ENCODE measurements at regions of chr1 and their contacts with region 1.

Region 1: GRCh38 chr1:201447911-201448871 is 20.8 kb downstream of the PHLDA3 start:
- DNase-seq: peak; percentile 70 to 87 (median 78)
- ATAC-seq: peak; percentile 46 to 86 (median 78)
- H3K4me3 ChIP-seq: no peak overlapping the region
- H3K27ac ChIP-seq: peak overlapping the region; percentile 9 to 84 (median 64)
- H3K4me1 ChIP-seq: peaks cover 9 to 41% (median 28%) of the 10 kb centered on the region in 12 donors
- H3K27me3 ChIP-seq: no peaks in the 10 kb centered on the region
- CTCF ChIP-seq: peak; percentile 78 to 93 (median 85)
- POLR2A ChIP-seq: no peak

Region 2: DNA sequence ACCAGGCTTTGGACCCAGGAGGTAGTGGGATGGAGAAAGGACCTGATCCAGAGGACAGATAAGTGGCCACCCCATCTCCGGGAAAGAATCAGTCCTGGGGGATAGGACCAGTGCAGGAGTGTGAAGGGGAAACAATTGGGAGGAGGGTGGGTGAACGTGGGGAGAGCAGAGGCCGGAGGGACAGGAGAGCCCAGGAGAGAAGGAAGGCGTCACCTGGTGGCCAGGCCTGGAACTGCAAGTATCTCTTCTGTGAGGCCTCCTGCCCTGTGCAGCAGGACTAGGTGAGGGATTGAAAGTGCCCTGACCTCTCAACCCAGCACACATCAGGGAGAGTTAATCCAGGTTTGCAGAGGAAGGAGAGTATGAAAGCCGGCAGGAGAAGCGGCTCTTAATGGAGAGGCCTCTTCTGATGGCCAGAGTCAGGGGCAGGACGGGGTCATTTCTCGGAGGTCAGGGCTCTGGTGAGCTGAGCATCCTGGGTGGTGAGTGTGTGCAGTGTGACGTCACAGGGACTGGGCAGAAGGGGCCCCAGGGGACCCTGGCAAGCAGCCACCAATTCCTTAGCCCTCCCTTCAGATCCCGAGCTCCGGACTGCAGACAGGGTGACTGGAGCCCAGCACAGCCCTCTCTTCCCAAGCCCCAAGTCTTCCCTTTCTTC is 39.9 kb before region 1 on chr1:
- intact Hi-C with region 1: no loop called
- DNase-seq: peak; percentile 75 to 86 (median 83)
- ATAC-seq: peak; percentile 70 to 87 (median 80)
- H3K4me3 ChIP-seq: no peak overlapping the region
- H3K27ac ChIP-seq: peak overlapping the region in 2 of 12 donors; percentile 19 to 28
- H3K4me1 ChIP-seq: peaks cover 0 to 22% (median 4%) of the 10 kb centered on the region in 12 donors
- H3K27me3 ChIP-seq: no peaks in the 10 kb centered on the region
- CTCF ChIP-seq: peak; percentile 88 to 96 (median 93)
- POLR2A ChIP-seq: no peak

Region 3: GRCh38 chr1:201468844-201469511 is 20.8 kb after region 1 on chr1 and contains the start of gene PHLDA3:
- intact Hi-C with region 1: loop called in 1 of 10 experiments (anchors 2 kb)
- DNase-seq: peak; percentile 87 to 92 (median 92)
- ATAC-seq: peak; percentile 63 to 89 (median 86)
- H3K4me3 ChIP-seq: peak within 1 kb of the TSS; percentile 71 to 97 (median 90)
- H3K27ac ChIP-seq: peak within 1 kb of the TSS; percentile 86 to 98 (median 94)
- H3K4me1 ChIP-seq: peaks cover 0 to 42% (median 16%) of the 10 kb centered on the region in 12 donors
- H3K27me3 ChIP-seq: peaks cover 0 to 18% (median 0%) of the 10 kb centered on the region in 9 donors
- CTCF ChIP-seq: peak in 4 of 12 donors; percentile 5 to 29 (median 8)
- POLR2A ChIP-seq: peak in 1 of 2 donors; percentile 85
- total RNA-seq, gene PHLDA3: 18.4 to 48.1 (median 33.4) TPM

Region 4: DNA sequence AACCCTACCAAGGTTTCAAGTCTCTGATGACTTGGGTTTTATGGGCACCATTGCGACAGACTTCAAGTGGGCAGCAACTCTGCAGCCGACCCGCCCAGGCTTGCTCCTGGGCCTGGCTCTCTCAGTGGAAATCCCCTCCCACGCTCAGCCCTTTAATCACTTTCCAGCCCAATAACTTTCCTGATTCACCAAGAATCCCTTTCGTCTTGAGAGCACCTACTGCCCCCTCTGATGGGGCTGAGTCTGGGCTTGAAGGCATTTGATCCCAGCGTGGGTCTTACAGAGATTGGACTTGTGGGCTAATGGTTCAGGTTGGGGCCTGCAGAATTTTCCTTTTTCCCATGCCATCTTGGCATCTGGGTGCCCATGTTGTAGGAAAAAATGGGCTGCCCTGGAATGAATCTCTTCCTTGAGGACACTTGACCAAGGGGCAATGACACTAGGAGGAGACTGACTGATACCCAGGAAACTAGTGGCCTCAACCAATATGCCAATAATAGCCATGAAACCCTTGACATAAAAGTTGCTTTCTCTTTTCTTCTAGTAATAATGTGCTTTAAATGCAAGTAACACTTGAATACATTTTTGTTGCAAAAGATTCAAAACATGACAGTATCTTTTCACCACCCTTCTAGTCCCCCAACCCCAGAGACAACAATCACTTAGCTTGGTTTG is 28.6 kb after region 1 on chr1:
- intact Hi-C with region 1: loop called (anchors 1 to 5 kb)
- DNase-seq: no peak
- ATAC-seq: no peak
- H3K4me3 ChIP-seq: no peak overlapping the region
- H3K27ac ChIP-seq: no peak overlapping the region
- H3K4me1 ChIP-seq: peaks cover 5 to 27% (median 20%) of the 10 kb centered on the region in 12 donors
- H3K27me3 ChIP-seq: peaks cover 0 to 5% (median 0%) of the 10 kb centered on the region in 9 donors
- CTCF ChIP-seq: no peak
- POLR2A ChIP-seq: no peak

Region 5: GRCh38 chr1:201481761-201482493 is 33.7 kb after region 1 on chr1:
- intact Hi-C with region 1: loop called (anchors 1 to 5 kb)
- DNase-seq: peak; percentile 88 to 93 (median 89)
- ATAC-seq: peak; percentile 82 to 89 (median 86)
- H3K4me3 ChIP-seq: peak overlapping the region in 10 of 12 donors; percentile 13 to 54 (median 40)
- H3K27ac ChIP-seq: peak overlapping the region in 11 of 12 donors; percentile 6 to 98 (median 77)
- H3K4me1 ChIP-seq: peaks cover 5 to 44% (median 31%) of the 10 kb centered on the region in 12 donors
- H3K27me3 ChIP-seq: peaks cover 0 to 6% (median 0%) of the 10 kb centered on the region in 9 donors
- CTCF ChIP-seq: peak; percentile 84 to 97 (median 93)
- POLR2A ChIP-seq: peak in 1 of 2 donors; percentile 10

Region 6: GRCh38 chr1:201491896-201492511 is 43.8 kb after region 1 on chr1:
- intact Hi-C with region 1: no loop called
- DNase-seq: peak in 1 of 5 donors; percentile 40
- ATAC-seq: no peak
- H3K4me3 ChIP-seq: no peak overlapping the region
- H3K27ac ChIP-seq: peak overlapping the region in 11 of 12 donors; percentile 4 to 98 (median 23)
- H3K4me1 ChIP-seq: peaks cover 23 to 93% (median 74%) of the 10 kb centered on the region in 12 donors
- H3K27me3 ChIP-seq: no peaks in the 10 kb centered on the region
- CTCF ChIP-seq: no peak
- POLR2A ChIP-seq: no peak

Region 7: DNA sequence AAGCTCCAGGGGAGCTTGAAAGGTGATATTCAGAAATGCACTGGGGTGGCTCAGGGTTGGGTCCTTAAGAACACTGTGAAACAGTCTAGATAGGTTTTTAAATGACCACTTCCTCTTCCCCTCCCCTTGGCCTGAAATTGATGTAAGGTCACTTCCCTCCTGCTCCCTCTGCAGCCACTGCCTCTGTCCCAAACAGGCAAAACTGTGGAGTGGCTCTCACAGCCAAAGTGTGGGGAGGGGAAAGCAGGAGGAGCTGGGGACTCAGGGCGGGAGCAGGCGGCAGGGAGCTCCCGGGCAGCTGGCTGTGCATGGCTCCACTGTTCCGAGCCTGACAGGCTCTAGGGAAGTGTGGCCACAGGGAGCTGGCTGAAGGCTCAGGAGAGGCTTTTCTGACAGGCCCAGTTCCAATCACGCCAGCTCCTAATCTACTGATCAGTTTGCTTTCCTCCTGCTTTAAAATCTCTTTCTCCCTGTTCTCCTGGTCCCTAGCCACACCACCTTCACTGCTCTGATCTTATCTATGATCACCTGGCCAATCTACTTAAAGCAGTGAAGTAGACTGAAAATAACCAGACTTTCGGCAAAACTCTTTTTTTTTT is 63.8 kb after region 1 on chr1:
- intact Hi-C with region 1: loop called (anchors 2 to 5 kb)
- DNase-seq: peak; percentile 76 to 82 (median 77)
- ATAC-seq: peak; percentile 54 to 87 (median 70)
- H3K4me3 ChIP-seq: peak overlapping the region in 2 of 12 donors; percentile 3 to 14
- H3K27ac ChIP-seq: peak overlapping the region; percentile 61 to 98 (median 72)
- H3K4me1 ChIP-seq: peaks cover 7 to 44% (median 28%) of the 10 kb centered on the region in 12 donors
- H3K27me3 ChIP-seq: no peaks in the 10 kb centered on the region
- CTCF ChIP-seq: no peak
- POLR2A ChIP-seq: no peak

Region 8: DNA sequence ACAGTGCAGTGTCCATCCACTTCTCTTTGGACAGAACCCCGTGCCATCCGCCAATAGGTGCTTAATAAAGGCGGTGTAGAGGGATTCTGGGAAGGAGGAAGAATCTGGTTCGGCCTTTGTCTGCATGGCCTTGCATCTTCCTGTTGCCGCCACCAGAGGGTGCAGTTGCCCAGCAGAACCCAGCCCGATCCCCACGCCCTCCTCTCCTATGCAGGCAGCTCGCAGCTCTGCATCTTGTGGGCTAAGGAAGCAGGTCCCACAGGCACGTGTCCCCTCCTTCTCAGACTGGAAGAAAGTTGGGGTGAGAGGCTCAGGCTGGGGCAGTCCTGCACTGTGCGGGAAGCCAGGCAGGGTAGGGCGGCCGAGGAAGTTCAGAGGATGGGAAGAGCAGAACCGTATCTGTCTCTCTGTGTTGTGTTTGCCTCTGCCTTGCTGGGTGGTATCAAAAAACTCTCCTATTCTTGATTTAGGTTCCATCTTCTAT is 111.5 kb after region 1 on chr1:
- intact Hi-C with region 1: no loop called
- DNase-seq: peak; percentile 81 to 89 (median 85)
- ATAC-seq: peak; percentile 77 to 85 (median 78)
- H3K4me3 ChIP-seq: no peak overlapping the region
- H3K27ac ChIP-seq: peak overlapping the region in 4 of 12 donors; percentile 25 to 51 (median 39)
- H3K4me1 ChIP-seq: peaks cover 14 to 94% (median 73%) of the 10 kb centered on the region in 12 donors
- H3K27me3 ChIP-seq: no peaks in the 10 kb centered on the region
- CTCF ChIP-seq: peak; percentile 90 to 97 (median 94)
- POLR2A ChIP-seq: no peak

Region 9: DNA sequence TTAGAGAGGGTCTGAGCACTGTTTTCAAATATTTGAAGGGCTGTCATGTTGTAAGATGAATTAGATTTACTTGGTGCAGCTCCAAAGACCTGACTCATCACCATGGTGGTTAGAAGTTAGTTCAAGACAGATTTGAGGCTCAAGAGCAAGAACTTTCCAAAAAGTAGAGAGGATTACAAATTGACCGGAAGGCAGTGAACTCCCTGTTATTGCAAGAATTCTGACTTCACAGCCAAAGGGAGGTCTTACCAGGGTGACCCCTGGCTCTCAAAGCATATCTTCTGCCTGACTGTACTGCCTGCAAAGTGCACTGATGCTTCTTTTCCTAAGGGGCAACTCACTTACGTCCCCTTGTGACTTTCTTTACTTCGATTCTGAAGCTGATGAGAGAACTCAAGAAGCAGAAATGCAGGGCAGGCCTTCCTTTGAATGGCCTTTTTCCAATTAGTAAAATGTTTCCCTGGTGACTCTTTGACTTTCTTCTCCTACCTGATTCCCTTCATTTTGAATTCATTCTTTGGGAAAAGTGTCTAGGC is 177.1 kb after region 1 on chr1:
- intact Hi-C with region 1: no loop called
- DNase-seq: no peak
- ATAC-seq: peak in 2 of 4 donors; percentile 29 to 53
- H3K4me3 ChIP-seq: no peak overlapping the region
- H3K27ac ChIP-seq: peak overlapping the region in 1 of 12 donors; percentile 24
- H3K4me1 ChIP-seq: peaks cover 0 to 45% (median 27%) of the 10 kb centered on the region in 12 donors
- H3K27me3 ChIP-seq: no peaks in the 10 kb centered on the region
- CTCF ChIP-seq: no peak
- POLR2A ChIP-seq: no peak

Measured in heart left ventricle (tissue), 16 donors.